Activated T-helper 1 cell treated with anti-CD3 and anti-CD28 coated beads, Interleukin-12 subunit alpha, Interleukin-12 subunit beta, Interleukin-2, Interleukin-4 antibody, amounts not matched to agents 30 ng/mL and 10 ng/mL and 1 ng/mL, durations not matched to agents 14 hours and 24 hours and 36 hours (primary cell): ENCODE measurements at regions of chr6 and their contacts with region 1.

Region 1: GRCh38 chr6:104525677-104526312 is 333.9 kb downstream of the HACE1 start:
- DNase-seq: peak; percentile 49
- H3K4me3 Mint-ChIP-seq: peak overlapping the region; percentile 27
- H3K27ac Mint-ChIP-seq: no peak overlapping the region
- H3K4me1 Mint-ChIP-seq: peaks cover 7% of the 10 kb centered on the region
- H3K27me3 Mint-ChIP-seq: peaks cover 15% of the 10 kb centered on the region

Region 2: DNA sequence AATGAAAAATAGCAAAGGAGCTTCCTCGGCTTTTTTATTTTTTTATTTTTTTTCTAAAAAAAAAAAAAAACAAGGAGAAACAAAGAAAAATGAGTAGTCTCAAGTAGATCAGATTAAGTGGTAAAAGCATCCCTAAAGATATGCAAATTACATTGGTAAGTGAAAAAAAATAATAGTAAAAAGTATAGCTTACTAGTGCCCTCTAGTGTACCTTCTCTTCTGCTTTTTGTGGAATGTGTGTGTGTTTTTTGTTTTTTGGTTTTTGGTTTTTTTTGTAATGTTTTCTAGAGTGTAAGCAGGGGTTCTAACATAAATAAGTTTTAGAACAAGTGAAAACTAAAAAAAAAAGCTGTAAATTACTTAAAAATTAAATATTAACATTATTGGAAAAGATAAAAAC is 728.1 kb before region 1 on chr6:
- intact Hi-C with region 1: loop called (anchors 5 kb)
- DNase-seq: no peak
- H3K4me3 Mint-ChIP-seq: no peak overlapping the region
- H3K27ac Mint-ChIP-seq: no peak overlapping the region
- H3K4me1 Mint-ChIP-seq: no peaks in the 10 kb centered on the region
- H3K27me3 Mint-ChIP-seq: no peaks in the 10 kb centered on the region

Region 3: DNA sequence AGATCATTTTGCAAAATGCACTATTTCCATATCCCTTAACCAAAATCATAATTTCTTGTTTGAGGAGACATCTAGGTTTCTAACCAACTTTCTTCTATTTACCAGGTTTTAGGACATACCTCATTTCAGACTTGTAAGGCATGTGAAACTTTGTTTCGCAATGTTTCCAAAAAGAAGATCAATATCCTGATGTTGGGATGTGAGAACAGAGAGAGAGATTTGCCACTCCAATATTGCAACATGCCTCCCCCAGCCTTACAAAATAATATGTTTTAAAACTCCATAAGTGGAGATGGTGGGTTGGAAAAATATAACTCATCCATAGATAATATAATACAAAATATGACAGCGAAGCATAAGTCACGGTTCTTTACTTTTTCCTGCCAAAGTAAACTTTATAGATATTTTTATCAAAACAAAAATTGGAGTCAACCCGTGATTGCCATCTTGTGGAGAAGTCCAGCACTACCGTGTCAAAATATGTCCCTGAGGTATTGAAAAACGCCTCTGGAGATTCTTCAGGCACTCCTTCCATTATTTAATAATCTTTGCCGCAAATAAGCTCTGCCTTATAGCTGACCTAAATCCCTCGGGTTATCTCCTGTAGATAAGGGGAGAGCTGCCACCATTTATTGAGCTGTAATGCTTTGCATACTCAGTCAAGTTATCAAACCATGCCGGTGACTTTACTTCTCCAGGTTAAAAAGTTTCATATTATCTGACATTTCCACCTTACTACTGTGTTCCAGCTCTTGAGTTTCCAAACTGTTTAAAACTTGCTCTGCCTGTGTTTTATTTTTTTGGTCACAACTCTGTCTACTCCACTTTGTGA is 200.2 kb before region 1 on chr6:
- intact Hi-C with region 1: loop called (anchors 5 kb)
- DNase-seq: no peak
- H3K4me3 Mint-ChIP-seq: no peak overlapping the region
- H3K27ac Mint-ChIP-seq: no peak overlapping the region
- H3K4me1 Mint-ChIP-seq: no peaks in the 10 kb centered on the region
- H3K27me3 Mint-ChIP-seq: no peaks in the 10 kb centered on the region

Region 4: DNA sequence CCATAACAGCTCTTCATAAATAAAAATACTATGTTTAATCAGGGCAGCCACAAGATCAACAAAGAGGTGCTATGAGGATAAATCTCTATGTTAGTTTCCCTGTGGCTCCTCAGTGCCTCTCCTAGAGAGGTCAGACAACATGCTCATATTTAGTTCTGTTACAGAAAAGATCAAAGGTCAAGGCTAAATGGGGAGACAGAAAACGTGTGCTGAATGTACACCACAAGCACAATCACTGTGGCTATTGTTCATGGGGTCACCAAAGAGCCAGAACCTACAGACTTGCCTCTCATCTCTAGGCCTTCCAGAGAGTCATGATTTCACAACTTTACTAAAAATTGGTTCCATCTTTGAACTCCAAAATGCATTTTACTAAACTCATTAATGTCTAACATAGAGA is 75.9 kb before region 1 on chr6:
- intact Hi-C with region 1: no loop called
- DNase-seq: no peak
- H3K4me3 Mint-ChIP-seq: no peak overlapping the region
- H3K27ac Mint-ChIP-seq: no peak overlapping the region
- H3K4me1 Mint-ChIP-seq: no peaks in the 10 kb centered on the region
- H3K27me3 Mint-ChIP-seq: no peaks in the 10 kb centered on the region

Region 5: GRCh38 chr6:104771258-104771832 is 245.6 kb after region 1 on chr6:
- intact Hi-C with region 1: loop called (anchors 2 kb)
- DNase-seq: no peak
- H3K4me3 Mint-ChIP-seq: no peak overlapping the region
- H3K27ac Mint-ChIP-seq: no peak overlapping the region
- H3K4me1 Mint-ChIP-seq: peaks cover 5% of the 10 kb centered on the region
- H3K27me3 Mint-ChIP-seq: no peaks in the 10 kb centered on the region

Region 6: DNA sequence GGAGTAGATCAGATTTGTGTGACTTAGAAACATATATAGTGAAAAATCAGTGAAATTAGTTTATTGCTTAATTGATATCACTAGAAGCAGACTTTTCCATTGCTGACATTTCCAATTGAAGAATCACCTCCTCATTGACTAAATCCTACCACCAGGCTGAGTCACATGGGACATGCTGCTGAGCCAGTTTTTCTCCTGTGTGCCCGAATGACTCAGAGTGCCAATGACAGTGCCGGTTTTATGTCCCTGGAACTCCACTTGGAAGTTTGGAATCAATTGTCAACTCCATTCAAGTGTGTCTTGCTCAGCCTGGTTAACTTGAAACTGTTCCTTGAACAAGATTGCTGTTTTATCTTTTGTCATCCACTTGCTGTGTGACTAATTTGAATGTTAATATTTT is 1244.2 kb after region 1 on chr6:
- intact Hi-C with region 1: no loop called
- DNase-seq: no peak
- H3K4me3 Mint-ChIP-seq: no peak overlapping the region
- H3K27ac Mint-ChIP-seq: no peak overlapping the region
- H3K4me1 Mint-ChIP-seq: peaks cover 9% of the 10 kb centered on the region
- H3K27me3 Mint-ChIP-seq: no peaks in the 10 kb centered on the region